Activated naive CD8-positive, alpha-beta T cell treated with anti-CD3 and anti-CD28 coated beads, Interleukin-2, amount 10 ng/mL, durations not matched to agents 7 days and 5 days (primary cell): ENCODE measurements at regions of chr12 and their contacts with region 1.

Region 1: GRCh38 chr12:122123051-122123760 is 44.6 kb downstream of the MLXIP start:
- DNase-seq: peak; percentile 69
- ATAC-seq: peak; percentile 53
- H3K4me3 Mint-ChIP-seq: peak overlapping the region; percentile 54
- H3K27ac Mint-ChIP-seq: peak overlapping the region; percentile 73
- H3K4me1 Mint-ChIP-seq: peaks cover 27% of the 10 kb centered on the region
- H3K27me3 Mint-ChIP-seq: no peaks in the 10 kb centered on the region

Region 2: DNA sequence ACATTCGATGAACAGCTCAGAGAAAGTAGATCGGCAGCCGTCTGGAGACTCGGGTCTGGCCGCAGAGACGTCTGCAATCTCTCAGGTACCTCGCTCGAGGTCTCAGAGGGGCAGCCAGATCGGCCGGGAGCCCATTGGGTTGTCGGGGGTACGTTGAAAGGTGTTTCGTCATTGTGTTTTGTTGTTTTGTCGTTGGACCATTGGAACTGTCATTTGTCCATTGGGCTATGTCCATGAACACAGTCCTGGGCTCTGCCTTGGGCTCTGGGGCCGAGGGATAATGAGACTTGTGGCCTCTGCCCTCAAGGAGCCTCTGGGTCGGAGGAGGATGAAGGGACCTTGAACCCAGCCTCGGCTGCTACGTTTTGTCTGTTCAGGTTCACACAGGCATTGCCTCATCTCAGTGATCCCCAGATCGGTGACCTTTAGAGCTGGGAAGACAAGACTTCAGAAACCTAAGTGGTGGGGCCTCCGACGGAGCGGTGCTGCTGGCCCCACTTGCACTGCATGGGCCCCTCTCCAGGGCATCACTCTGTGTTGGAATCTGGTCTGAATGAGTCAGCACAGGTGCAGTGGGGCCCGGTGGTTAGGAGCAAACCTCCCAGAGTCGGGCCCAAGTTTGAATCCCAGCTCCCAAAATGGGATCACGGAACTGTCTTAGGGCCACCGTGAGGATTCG is 68.2 kb before region 1 on chr12:
- POLR2A ChIA-PET with region 1: interaction called, 12 read pairs
- DNase-seq: no peak
- ATAC-seq: no peak
- H3K4me3 Mint-ChIP-seq: no peak overlapping the region
- H3K27ac Mint-ChIP-seq: peak overlapping the region; percentile 36
- H3K4me1 Mint-ChIP-seq: peaks cover 6% of the 10 kb centered on the region
- H3K27me3 Mint-ChIP-seq: no peaks in the 10 kb centered on the region

Region 3: DNA sequence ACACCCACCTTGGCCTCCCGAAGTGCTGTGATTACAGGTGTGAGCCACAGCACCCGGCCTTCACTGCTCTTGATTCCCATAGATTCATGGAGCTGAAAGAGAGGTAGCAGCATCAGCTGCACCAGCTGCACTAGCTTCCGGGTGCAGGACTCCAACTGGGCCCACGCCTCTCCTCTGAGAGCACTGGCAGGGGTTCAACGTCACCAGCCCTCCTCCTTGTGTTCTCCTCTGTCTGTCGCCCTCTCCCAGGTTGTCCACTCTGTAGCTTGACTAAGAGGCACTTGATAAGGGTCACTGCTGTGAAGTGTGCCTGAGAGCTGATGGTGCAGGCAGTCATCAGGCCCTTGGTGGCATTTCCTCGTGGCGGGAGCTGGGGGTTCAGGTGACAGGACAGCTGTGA is 16.4 kb before region 1 on chr12:
- POLR2A ChIA-PET with region 1: no interaction called
- DNase-seq: no peak
- ATAC-seq: no peak
- H3K4me3 Mint-ChIP-seq: no peak overlapping the region
- H3K27ac Mint-ChIP-seq: no peak overlapping the region
- H3K4me1 Mint-ChIP-seq: peaks cover 44% of the 10 kb centered on the region
- H3K27me3 Mint-ChIP-seq: no peaks in the 10 kb centered on the region

Region 4: GRCh38 chr12:122174155-122174845 is 51.1 kb after region 1 on chr12 and contains the start of gene IL31:
- POLR2A ChIA-PET with region 1: no interaction called
- DNase-seq: no peak
- ATAC-seq: no peak
- H3K4me3 Mint-ChIP-seq: no peak within 1 kb of the TSS
- H3K27ac Mint-ChIP-seq: no peak within 1 kb of the TSS
- H3K4me1 Mint-ChIP-seq: no peaks in the 10 kb centered on the region
- H3K27me3 Mint-ChIP-seq: no peaks in the 10 kb centered on the region
- total RNA-seq, gene IL31: not detected